ENCODE measurements at regions of chr1 and their contacts with region 1.

Region 1: DNA sequence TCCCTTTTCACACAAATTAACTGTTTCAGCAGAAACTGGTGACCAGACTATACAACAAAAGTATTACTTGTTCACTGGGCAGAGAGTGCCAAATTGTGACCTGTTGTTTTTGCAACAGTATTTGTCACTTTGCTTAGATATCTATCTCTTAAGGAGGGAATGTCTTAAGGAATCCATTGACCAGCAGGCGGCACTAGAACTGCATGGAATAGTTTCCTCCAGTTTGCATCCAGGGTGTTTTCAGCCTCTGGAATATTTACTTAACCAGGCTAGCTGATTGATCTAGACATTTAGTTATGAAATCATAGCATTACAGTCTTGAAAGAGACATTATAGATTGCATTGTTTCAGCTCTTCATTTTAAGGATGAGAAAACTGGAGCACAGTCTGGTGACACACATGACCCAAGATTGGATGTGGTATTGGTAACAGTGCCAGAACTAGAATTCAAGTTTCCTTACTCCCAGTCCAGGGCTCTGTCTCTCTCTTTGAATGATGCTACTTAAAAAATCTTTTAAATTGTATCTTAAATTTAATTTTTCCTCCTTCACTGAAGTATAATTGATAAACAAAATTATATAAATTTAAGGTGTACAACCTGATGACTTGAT is 16.9 kb downstream of the RPTN start:
- DNase-seq: peak; percentile 57
- H3K4me3 Mint-ChIP-seq: no peak overlapping the region
- H3K27ac Mint-ChIP-seq: no peak overlapping the region
- H3K4me1 Mint-ChIP-seq: peaks cover 4% of the 10 kb centered on the region
- H3K27me3 Mint-ChIP-seq: peaks cover 35% of the 10 kb centered on the region

Region 2: DNA sequence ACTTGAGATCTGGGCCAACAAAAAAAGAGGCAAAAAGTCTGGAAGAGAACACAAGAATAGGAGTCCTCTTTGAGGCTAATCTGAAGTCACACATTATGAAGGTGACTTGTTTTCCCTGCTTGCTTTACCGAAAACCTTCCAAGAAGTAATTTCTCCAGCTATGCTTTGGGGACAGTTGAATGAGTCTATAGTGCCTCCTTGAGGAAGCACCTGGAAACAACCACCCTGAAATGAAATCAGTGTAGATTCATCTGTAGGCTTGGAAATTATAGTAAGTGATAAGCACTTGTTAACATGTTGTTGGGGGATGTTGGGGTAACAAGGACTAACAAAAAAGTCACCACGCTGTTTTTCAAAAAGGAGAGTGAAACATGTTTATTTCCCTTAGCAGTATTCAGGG is 40.4 kb after region 1 on chr1:
- intact Hi-C with region 1: loop called (anchors 1 kb)
- DNase-seq: peak; percentile 66
- H3K4me3 Mint-ChIP-seq: no peak overlapping the region
- H3K27ac Mint-ChIP-seq: no peak overlapping the region
- H3K4me1 Mint-ChIP-seq: peaks cover 3% of the 10 kb centered on the region
- H3K27me3 Mint-ChIP-seq: peaks cover 23% of the 10 kb centered on the region